HAP-1 (cell line): ENCODE measurements at regions of chr1 and their contacts with region 1.

Region 1: DNA sequence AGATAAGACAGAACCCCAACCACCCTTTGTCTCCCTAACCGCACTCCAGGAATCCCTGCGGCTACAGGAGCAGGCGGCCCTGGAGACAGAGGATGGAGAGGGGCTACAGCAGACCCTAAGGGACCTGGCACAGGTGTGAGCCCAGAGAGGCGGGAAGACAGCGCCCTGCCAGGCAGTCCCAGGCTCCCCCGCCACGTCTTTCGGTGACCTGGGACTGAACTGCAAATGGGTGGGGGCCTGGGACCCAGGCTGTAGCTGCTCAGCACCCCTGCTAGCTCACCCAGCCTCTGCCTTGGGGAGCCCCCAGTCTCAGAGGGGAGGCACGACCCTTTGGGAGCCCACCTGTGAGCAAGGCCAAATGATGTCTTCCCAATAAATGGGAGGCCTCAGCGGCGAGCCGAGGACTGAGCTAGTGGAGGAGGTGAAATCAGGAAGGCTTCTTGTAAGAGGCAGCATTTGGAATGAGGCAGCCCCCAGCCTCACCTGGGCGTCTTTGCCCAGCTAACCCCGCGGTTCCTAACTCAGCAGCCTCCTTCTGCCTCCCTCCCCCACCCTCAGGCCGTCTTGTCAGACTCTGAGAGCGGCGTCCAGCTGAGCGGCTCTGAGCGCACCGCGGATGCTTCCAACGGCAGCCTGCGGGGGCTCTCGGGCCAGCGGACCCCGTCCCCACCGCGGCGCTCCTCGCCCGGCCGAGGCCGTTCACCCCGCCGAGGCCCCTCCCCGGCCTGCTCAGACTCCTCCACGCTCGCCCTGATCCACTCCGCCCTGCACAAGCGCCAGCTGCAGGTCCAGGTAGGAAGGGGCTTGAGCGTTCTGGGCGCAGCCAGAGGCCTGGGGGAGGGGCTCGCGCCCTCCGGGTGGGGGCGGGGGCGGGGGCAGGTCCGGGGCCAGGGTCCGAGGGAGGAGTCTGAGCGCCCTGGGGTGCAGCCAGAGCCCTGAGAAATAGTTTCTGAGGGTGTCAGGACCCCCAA is 16.9 kb downstream of the CROCC start:
- DNase-seq: no peak
- H3K4me3 ChIP-seq: no peak overlapping the region
- H3K4me1 ChIP-seq: no peaks in the 10 kb centered on the region
- H3K27me3 ChIP-seq: no peaks in the 10 kb centered on the region

Region 2: GRCh38 chr1:16484931-16485330 is 453.7 kb before region 1 on chr1:
- in situ Hi-C with region 1: loop called (anchors 5 kb)
- DNase-seq: no peak
- H3K4me3 ChIP-seq: no peak overlapping the region
- H3K4me1 ChIP-seq: no peaks in the 10 kb centered on the region
- H3K27me3 ChIP-seq: no peaks in the 10 kb centered on the region

Region 3: GRCh38 chr1:16971341-16972188 is 32.9 kb after region 1 on chr1:
- in situ Hi-C with region 1: no loop called
- DNase-seq: no peak
- H3K4me3 ChIP-seq: no peak overlapping the region
- H3K4me1 ChIP-seq: no peaks in the 10 kb centered on the region
- H3K27me3 ChIP-seq: no peaks in the 10 kb centered on the region

Region 4: GRCh38 chr1:16992102-16992501 is 53.5 kb after region 1 on chr1:
- in situ Hi-C with region 1: no loop called
- DNase-seq: no peak
- H3K4me3 ChIP-seq: no peak overlapping the region
- H3K4me1 ChIP-seq: no peaks in the 10 kb centered on the region
- H3K27me3 ChIP-seq: no peaks in the 10 kb centered on the region

Region 5: GRCh38 chr1:17125756-17126237 is 187.2 kb after region 1 on chr1:
- in situ Hi-C with region 1: no loop called
- DNase-seq: peak; percentile 67 to 94
- H3K4me3 ChIP-seq: no peak overlapping the region
- H3K4me1 ChIP-seq: peaks cover 13% of the 10 kb centered on the region
- H3K27me3 ChIP-seq: no peaks in the 10 kb centered on the region